ENCODE measurements at regions of chr9 and their contacts with region 1.

Region 1: GRCh38 chr9:37903647-37904444 is at the start of gene SLC25A51:
- DNase-seq: peak; percentile 74 to 97
- H3K4me3 ChIP-seq: peak within 1 kb of the TSS; percentile 88 to 95
- H3K27ac ChIP-seq: peak within 1 kb of the TSS; percentile 81 to 84
- H3K4me1 ChIP-seq: peaks cover 3 to 12% of the 10 kb centered on the region in 2 donors
- H3K27me3 ChIP-seq: no peaks in the 10 kb centered on the region
- CTCF ChIP-seq: peak; percentile 83 to 98 (median 92)
- total RNA-seq, gene SLC25A51: 5.9 TPM

Region 2: DNA sequence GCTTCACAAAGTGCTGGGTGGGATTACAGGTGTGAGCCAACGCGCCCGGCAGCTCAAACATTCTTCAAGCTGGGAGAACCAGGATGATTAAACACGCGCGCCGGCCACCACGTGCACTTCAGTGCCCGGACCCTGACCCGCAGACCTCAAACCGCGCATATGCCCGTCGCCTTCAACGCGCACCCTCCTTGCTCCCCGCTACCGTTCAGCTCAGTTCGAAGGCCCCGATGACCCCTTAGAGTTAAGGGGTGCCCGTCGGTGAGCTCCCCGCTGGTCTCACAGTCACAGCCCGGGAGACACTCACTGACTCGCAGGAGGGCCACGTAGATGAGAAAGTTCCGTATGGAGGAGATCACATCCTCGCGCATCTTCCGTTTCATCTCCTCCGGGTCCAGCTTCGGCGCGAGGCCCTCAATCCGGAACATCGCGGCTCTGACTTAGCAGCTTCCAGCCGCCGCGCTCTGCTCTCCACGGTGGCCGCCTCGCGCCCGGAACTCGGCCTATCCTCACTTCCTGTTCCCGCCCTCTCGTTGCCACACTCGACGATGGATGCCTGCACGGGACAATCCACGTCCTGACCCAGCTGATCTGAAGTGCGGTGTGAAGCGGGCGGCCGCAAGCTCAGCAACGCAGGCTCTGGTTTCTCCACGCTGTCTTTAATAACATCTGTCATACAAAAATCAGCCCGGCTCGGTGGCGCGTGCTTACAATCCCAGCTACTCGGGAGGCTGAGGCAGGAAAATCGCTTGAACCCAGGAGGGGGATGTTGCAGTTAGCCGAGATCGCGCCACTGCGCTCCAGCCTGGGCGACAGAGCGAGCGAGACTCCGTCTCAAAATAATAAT is 311.5 kb before region 1 on chr9 and contains the start of gene TOMM5:
- intact Hi-C with region 1: loop called (anchors 5 kb)
- DNase-seq: peak; percentile 76 to 96
- H3K4me3 ChIP-seq: peak within 1 kb of the TSS; percentile 83 to 90
- H3K27ac ChIP-seq: peak within 1 kb of the TSS; percentile 67 to 77
- H3K4me1 ChIP-seq: peaks cover 5 to 9% of the 10 kb centered on the region in 2 donors
- H3K27me3 ChIP-seq: no peaks in the 10 kb centered on the region
- CTCF ChIP-seq: no peak
- total RNA-seq, gene TOMM5: 64.5 TPM

Region 3: DNA sequence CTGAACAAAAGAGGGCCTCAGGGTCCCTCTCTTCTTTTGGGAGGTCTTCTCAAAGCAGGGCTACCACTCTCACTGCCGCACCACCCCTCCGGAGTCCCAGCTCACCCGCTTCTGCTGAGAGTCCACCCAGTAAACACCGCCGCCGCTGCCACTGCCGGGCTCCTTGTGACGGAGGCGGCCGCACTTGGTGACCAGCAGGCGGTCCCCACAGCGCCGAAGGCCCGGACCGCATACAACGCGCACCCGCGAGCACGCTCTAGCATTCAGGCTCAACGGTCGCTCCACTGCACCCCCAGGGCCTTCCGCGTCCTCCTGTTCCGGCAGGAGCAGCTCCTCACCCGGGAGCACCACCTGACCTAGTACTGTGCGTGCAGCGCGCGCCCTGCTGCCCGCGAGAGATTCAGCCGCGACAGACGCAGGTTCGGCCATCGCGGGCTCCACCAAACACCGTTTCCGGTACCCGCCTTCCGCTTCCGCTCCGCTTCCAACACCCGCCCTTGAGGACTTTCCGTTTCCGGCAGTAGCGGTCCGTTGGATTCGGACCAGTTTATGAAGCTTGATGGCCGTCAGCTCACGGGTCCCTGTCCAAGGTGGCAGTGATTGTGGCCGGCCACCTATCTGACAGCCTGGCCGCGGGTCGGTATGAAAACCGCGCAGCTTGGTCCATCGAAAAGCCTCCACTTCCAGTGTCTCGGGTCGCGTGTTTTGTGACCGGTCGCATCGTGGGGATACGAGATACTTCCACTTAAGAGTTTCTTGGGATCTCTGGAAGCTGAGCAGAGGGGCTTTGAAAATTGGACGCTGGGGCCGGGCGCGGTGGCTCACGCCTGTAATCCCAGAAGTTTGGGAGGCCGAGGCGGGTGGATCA is 119.0 kb before region 1 on chr9 and contains the start of gene EXOSC3:
- intact Hi-C with region 1: loop called (anchors 10 kb)
- DNase-seq: peak; percentile 23 to 93
- H3K4me3 ChIP-seq: peak within 1 kb of the TSS; percentile 89 to 90
- H3K27ac ChIP-seq: peak within 1 kb of the TSS; percentile 78 to 81
- H3K4me1 ChIP-seq: peaks cover 0 to 10% of the 10 kb centered on the region in 2 donors
- H3K27me3 ChIP-seq: no peaks in the 10 kb centered on the region
- CTCF ChIP-seq: peak in 1 of 3 experiments; percentile 13
- total RNA-seq, gene EXOSC3: 9.0 TPM

Region 4: GRCh38 chr9:38074441-38074961 is 170.7 kb after region 1 on chr9:
- intact Hi-C with region 1: loop called (anchors 5 kb)
- DNase-seq: peak in 1 of 2 donors; percentile 62
- H3K4me3 ChIP-seq: no peak overlapping the region
- H3K27ac ChIP-seq: no peak overlapping the region
- H3K4me1 ChIP-seq: no peaks in the 10 kb centered on the region
- H3K27me3 ChIP-seq: no peaks in the 10 kb centered on the region
- CTCF ChIP-seq: no peak

Region 5: GRCh38 chr9:38311382-38312270 is 407.8 kb after region 1 on chr9:
- intact Hi-C with region 1: loop called (anchors 5 kb)
- DNase-seq: peak in 1 of 2 donors; percentile 73
- H3K4me3 ChIP-seq: peak overlapping the region; percentile 30 to 60
- H3K27ac ChIP-seq: peak overlapping the region; percentile 80
- H3K4me1 ChIP-seq: peaks cover 2 to 26% of the 10 kb centered on the region in 2 donors
- H3K27me3 ChIP-seq: no peaks in the 10 kb centered on the region
- CTCF ChIP-seq: no peak

Region 6: DNA sequence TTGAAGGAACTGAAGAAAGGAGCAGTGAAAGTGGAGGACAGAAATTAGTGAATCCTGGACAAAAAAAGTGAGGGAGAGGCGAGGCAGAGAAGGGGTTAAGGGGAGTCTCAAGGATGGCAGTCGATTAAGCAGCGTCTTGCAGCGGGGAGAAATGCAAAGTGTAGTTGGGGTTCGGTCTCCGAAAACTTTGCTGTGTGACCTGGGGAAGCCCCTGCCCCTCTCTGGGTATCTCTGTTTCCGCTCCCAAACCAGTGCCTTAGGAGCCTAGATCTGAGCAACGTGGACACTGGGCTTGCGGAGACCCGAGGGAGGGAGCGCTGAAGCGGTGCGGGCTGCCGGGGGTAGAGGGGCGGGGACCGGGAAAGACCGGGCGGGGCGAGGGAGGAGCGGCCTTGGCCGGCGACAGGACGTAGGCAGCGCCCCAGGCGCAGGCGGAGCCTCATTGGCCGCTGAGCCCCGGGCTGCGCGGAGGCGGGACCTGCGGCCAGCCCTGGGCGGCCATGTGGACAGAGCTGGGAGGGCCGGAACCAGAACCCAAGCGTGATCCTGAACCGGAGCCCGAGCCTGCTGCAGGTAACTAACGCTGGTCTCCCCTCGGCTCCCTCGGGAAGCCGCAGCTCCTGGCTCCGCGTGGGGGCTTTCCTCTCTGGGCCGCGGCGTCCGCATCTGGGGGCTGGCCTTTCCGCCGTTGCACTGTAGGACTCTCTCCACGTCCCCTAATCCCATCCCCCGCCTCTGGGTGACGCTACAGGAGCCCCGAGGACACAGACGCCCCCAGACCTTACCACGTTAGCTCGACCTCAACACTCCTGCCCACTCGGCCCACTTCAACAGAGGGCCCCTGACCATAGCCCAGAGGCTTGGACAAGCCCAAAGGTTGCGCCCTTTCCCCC is 488.6 kb after region 1 on chr9 and contains the start of gene ALDH1B1:
- intact Hi-C with region 1: loop called (anchors 10 kb)
- DNase-seq: peak; percentile 58 to 94
- H3K4me3 ChIP-seq: peak within 1 kb of the TSS; percentile 84 to 87
- H3K27ac ChIP-seq: peak within 1 kb of the TSS; percentile 98 to 99
- H3K4me1 ChIP-seq: peaks cover 31 to 47% of the 10 kb centered on the region in 2 donors
- H3K27me3 ChIP-seq: no peaks in the 10 kb centered on the region
- CTCF ChIP-seq: peak in 1 of 3 experiments; percentile 13
- total RNA-seq, gene ALDH1B1: 85.5 TPM